Mammary epithelial cell (primary cell): ENCODE measurements at regions of chr19 and their contacts with region 1.

Region 1: DNA sequence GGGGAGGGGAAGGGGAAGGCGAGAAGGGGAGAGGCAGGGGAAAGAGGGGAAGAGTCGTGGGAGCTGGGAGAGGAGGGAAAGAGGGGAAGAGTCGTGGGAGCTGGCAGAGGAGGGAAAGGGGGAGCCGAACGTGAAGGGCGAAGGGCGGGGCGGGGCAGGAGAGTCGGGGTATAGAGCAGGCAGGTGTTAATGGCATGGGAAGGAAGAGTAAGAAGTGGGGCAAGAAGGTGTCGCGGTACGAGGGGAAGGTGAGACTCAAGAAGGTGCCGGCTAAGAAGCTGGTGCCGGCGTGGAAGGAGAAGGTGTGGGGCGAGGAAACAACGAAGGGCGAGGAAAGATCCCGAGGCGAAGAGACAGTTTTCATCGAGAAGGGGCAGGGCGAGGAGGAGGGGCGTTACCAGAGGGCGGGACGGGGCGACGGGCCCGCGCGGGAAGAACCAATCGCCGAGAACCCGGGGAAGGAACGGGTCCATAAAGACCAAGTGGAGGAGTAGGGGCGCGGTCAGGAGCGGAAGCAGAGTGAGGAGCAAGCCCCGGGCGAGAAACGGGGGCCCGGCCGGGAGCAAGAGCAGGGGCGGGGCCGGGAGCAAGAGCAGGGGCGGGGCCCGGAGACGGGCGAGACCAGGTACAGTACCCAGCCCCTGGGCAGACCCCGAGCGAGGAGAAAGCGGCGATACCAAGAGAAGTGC is 463 bp downstream of the CATSPERG start:
- DNase-seq: peak; percentile 97
- H3K4me3 ChIP-seq: peak overlapping the region; percentile 66 to 74 (median 69)
- H3K27ac ChIP-seq: peak overlapping the region; percentile 75
- H3K4me1 ChIP-seq: peaks cover 15% of the 10 kb centered on the region
- H3K27me3 ChIP-seq: no peaks in the 10 kb centered on the region
- CTCF ChIP-seq: no peak

Region 2: GRCh38 chr19:37906869-37907734 is 429.0 kb before region 1 on chr19 and contains the start of gene SIPA1L3:
- CTCF ChIA-PET with region 1: interaction called, 5 read pairs
- dilution Hi-C with region 1: no loop called
- in situ Hi-C with region 1: loop called in 1 of 2 experiments (anchors 10 kb)
- intact Hi-C with region 1: loop called (anchors 1 kb)
- DNase-seq: peak; percentile 95
- H3K4me3 ChIP-seq: peak within 1 kb of the TSS; percentile 61 to 94 (median 84)
- H3K27ac ChIP-seq: peak within 1 kb of the TSS; percentile 44
- H3K4me1 ChIP-seq: peaks cover 15% of the 10 kb centered on the region
- H3K27me3 ChIP-seq: no peaks in the 10 kb centered on the region
- CTCF ChIP-seq: no peak
- total RNA-seq, gene SIPA1L3: 29.3 to 38.5 TPM

Region 3: GRCh38 chr19:38142176-38143035 is 193.7 kb before region 1 on chr19:
- CTCF ChIA-PET with region 1: no interaction called
- dilution Hi-C with region 1: no loop called
- in situ Hi-C with region 1: loop called in 1 of 2 experiments (anchors 25 kb)
- intact Hi-C with region 1: loop called (anchors 2 kb)
- DNase-seq: peak; percentile 32
- H3K4me3 ChIP-seq: no peak overlapping the region
- H3K27ac ChIP-seq: no peak overlapping the region
- H3K4me1 ChIP-seq: no peaks in the 10 kb centered on the region
- H3K27me3 ChIP-seq: no peaks in the 10 kb centered on the region
- CTCF ChIP-seq: peak; percentile 83 to 90

Region 4: DNA sequence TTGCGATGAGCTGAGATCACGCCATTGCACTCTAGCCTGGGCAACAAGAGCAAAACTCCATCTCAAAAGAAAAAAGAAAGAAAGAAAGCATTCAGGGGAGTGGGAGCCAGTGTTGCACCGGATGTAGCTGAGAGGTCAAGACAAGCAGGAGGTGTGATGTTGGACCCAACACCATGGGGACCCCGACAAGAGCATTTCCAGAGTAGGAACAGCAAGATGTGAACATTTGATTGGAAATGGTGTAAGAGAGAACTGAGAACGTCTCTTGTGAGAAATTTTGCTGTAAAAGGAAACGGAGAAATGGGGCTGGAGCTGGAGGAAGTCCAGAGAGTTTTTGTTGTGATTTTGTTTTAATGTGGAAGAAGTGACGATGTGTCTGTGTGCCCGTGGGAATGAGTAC is 96.3 kb before region 1 on chr19:
- CTCF ChIA-PET with region 1: no interaction called
- dilution Hi-C with region 1: no loop called
- in situ Hi-C with region 1: loop called (anchors 5 kb)
- intact Hi-C with region 1: loop called (anchors 1 kb)
- DNase-seq: no peak
- H3K4me3 ChIP-seq: no peak overlapping the region
- H3K27ac ChIP-seq: no peak overlapping the region
- H3K4me1 ChIP-seq: no peaks in the 10 kb centered on the region
- H3K27me3 ChIP-seq: no peaks in the 10 kb centered on the region
- CTCF ChIP-seq: no peak

Region 5: GRCh38 chr19:38263689-38264485 is 72.2 kb before region 1 on chr19:
- CTCF ChIA-PET with region 1: interaction called, 3 read pairs
- dilution Hi-C with region 1: no loop called
- in situ Hi-C with region 1: no loop called
- intact Hi-C with region 1: loop called (anchors 1 kb)
- DNase-seq: peak; percentile 95
- H3K4me3 ChIP-seq: peak overlapping the region in 2 of 3 experiments; percentile 7 to 83
- H3K27ac ChIP-seq: peak overlapping the region; percentile 90
- H3K4me1 ChIP-seq: peaks cover 28% of the 10 kb centered on the region
- H3K27me3 ChIP-seq: no peaks in the 10 kb centered on the region
- CTCF ChIP-seq: no peak

Region 6: GRCh38 chr19:38361633-38362075 is 25.6 kb after region 1 on chr19:
- CTCF ChIA-PET with region 1: no interaction called
- dilution Hi-C with region 1: no loop called
- in situ Hi-C with region 1: no loop called
- intact Hi-C with region 1: loop called (anchors 2 kb)
- DNase-seq: peak; percentile 81
- H3K4me3 ChIP-seq: peak overlapping the region; percentile 53 to 76 (median 59)
- H3K27ac ChIP-seq: no peak overlapping the region
- H3K4me1 ChIP-seq: peaks cover 8% of the 10 kb centered on the region
- H3K27me3 ChIP-seq: peaks cover 12% of the 10 kb centered on the region
- CTCF ChIP-seq: no peak

Region 7: DNA sequence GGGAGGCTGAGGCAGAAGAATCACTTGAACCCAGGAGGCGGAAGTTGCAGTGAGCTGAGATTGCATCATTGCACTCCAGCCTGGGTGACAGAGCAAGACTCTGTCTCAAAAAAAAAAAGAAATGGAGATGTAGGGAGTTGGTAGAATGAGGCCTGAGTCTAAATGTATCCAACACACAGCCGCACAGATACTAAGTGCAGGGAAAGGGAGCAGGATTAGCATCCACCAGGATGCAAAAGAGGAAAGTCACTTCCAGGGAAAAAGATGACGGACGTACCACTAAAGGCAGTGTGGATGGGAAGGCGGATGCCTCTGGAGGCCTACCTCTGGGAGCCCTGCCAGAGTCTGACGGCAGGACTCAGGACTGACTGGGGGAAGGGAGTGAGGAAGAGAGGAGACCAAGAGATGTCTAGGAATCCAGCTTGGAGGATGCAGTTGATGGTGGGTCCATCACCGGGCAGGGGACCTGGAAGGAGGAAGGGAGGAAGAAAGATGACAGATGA is 73.6 kb after region 1 on chr19:
- CTCF ChIA-PET with region 1: no interaction called
- dilution Hi-C with region 1: loop called (anchors 5 kb)
- in situ Hi-C with region 1: no loop called
- intact Hi-C with region 1: no loop called
- DNase-seq: no peak
- H3K4me3 ChIP-seq: no peak overlapping the region
- H3K27ac ChIP-seq: no peak overlapping the region
- H3K4me1 ChIP-seq: no peaks in the 10 kb centered on the region
- H3K27me3 ChIP-seq: no peaks in the 10 kb centered on the region
- CTCF ChIP-seq: no peak